Activated naive CD4-positive, alpha-beta T cell treated with anti-CD3 and anti-CD28 coated beads for 36 hours (primary cell): ENCODE measurements at regions of chr16 and their contacts with region 1.

Region 1: DNA sequence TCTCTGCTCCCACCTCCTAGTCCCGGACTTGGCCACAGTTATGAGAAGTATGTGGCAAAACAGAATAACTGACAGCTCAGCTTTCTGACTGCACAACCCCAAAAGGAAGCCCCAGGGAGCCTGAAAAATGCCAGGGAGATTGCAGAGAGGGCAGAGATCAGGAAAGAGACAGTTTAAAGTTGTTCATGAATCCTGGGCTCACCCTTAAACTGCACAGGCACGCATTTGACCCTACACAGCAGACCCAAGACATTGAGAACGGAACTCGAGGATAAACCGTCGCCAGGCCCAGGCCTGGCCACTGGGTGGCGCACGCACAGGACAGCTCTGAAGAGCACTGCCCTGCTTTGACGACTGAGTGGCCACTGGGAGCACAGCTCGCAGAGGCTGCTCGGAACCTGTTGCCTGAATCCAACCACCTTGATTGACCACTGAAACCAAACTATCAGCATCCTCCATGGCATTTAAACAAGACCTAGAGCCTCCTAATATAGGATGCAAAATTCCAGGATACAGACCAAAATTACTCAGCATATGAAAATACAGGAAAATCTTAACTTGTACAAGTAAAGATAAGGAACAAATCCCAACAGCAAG is 114.0 kb downstream of the C16orf95 start:
- DNase-seq: peak; percentile 68
- H3K4me3 Mint-ChIP-seq: no peak overlapping the region
- H3K27ac Mint-ChIP-seq: no peak overlapping the region
- H3K4me1 Mint-ChIP-seq: no peaks in the 10 kb centered on the region
- H3K27me3 Mint-ChIP-seq: peaks cover 8% of the 10 kb centered on the region

Region 2: DNA sequence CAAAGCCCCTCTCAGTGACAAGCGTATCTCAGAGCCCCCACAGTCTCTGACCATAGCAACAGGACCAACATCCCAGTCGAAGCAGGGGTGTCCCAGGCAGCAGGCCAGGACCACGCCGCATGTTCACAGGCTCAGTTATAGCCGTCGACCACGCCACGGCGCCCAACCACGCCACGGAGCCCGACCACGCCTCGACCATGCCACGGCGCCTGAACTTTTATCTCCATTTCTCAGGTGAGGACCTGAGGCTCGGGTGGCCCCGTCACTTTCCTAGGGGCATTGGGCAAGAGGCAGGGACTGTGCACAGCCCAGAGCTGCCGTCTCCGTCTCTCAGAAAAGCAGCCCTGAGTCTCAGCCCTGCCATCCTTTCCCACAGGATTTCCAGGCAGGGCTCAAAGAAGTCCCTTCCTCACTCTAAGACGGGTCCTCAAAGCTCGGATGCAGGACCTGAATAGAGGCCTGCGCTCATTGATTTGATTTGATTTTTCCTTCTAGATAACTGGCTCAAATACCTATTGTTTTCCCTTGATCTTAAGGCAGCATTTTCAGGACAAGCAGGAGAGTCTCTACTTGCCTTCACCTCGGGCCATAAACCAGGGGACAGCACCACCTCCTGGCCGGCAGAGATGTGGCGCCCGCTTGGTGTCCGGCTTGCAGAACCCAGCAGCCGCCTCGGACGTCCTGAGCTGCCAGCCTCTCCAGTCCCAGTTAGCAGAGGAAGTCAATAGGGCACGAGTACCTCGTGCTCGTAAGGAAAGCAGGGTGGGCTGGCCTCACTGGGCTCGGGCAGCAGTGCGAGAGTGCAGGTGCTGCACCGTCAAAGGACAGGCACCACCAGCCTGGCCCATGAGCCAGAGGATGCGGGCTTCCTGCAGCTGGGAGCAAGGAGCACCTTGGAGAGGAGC is 75.3 kb after region 1 on chr16:
- CTCF ChIA-PET with region 1: interaction called, 4 read pairs
- intact Hi-C with region 1: loop called (anchors 2 kb)
- DNase-seq: peak; percentile 65
- H3K4me3 Mint-ChIP-seq: no peak overlapping the region
- H3K27ac Mint-ChIP-seq: no peak overlapping the region
- H3K4me1 Mint-ChIP-seq: peaks cover 7% of the 10 kb centered on the region
- H3K27me3 Mint-ChIP-seq: peaks cover 5% of the 10 kb centered on the region